PC-3 (cell line): ENCODE measurements at regions of chr2 and their contacts with region 1.

Region 1: DNA sequence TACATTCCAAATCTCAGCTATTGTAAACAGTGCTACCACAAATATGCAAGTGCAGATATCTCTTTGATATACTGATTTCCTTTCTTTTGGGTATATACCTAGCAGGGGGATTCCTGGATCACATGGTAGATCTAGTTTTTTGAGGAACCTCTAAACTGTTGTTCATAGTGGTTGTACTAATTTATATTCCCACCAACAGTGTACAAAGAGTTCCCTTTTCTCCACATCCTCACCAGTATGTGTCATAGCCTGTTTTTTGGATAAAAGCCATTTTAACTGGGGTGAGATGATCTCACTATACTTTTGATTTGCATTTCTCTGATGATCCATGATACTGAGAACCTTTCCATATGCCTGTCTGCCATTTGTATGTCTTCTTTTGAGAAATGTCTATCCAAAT is 6.3 kb upstream of the CCNT2 start:
- DNase-seq: peak; percentile 86
- ATAC-seq: peak; percentile 74
- H3K4me3 ChIP-seq: no peak overlapping the region
- H3K27ac ChIP-seq: peak overlapping the region; percentile 35
- H3K4me1 ChIP-seq: peaks cover 19% of the 10 kb centered on the region
- H3K27me3 ChIP-seq: no peaks in the 10 kb centered on the region
- CTCF ChIP-seq: no peak

Region 2: GRCh38 chr2:134790487-134790886 is 121.9 kb before region 1 on chr2:
- CTCF ChIA-PET with region 1: no interaction called
- POLR2A ChIA-PET with region 1: no interaction called
- intact Hi-C with region 1: no loop called
- DNase-seq: no peak
- ATAC-seq: no peak
- H3K4me3 ChIP-seq: no peak overlapping the region
- H3K27ac ChIP-seq: no peak overlapping the region
- H3K4me1 ChIP-seq: no peaks in the 10 kb centered on the region
- H3K27me3 ChIP-seq: no peaks in the 10 kb centered on the region
- CTCF ChIP-seq: peak; percentile 30; the same call in 1 of the 2 replicates

Region 3: GRCh38 chr2:135030826-135031225 is 118.5 kb after region 1 on chr2:
- CTCF ChIA-PET with region 1: no interaction called
- POLR2A ChIA-PET with region 1: no interaction called
- intact Hi-C with region 1: no loop called
- DNase-seq: peak; percentile 39
- ATAC-seq: no peak
- H3K4me3 ChIP-seq: no peak overlapping the region
- H3K27ac ChIP-seq: no peak overlapping the region
- H3K4me1 ChIP-seq: no peaks in the 10 kb centered on the region
- H3K27me3 ChIP-seq: no peaks in the 10 kb centered on the region
- CTCF ChIP-seq: no peak

Region 4: DNA sequence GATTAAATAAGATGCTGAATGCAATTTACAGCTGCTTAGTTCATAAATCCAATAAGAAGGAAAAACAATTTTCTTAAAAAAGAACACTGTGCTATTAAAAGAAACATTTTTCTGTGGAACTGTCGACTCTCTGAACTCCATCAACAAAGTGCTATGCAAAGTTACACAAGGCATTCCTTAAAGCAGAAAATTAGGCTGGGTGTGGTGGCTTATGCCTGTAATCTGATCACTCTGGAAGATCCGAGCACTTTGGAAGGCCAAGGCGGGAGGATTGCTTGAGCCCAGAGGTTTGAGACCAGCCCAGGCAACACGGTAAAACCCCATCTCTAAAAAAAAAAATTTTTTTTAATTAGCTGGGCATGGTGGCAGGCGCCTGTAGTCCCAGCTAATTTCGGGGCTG is 950.9 kb after region 1 on chr2:
- CTCF ChIA-PET with region 1: no interaction called
- POLR2A ChIA-PET with region 1: interaction called, 13 read pairs
- intact Hi-C with region 1: no loop called
- DNase-seq: no peak
- ATAC-seq: no peak
- H3K4me3 ChIP-seq: no peak overlapping the region
- H3K27ac ChIP-seq: no peak overlapping the region
- H3K4me1 ChIP-seq: no peaks in the 10 kb centered on the region
- H3K27me3 ChIP-seq: no peaks in the 10 kb centered on the region
- CTCF ChIP-seq: no peak